Naive thymus-derived CD4-positive, alpha-beta T cell (primary cell): ENCODE measurements at regions of chr7 and their contacts with region 1.

Region 1: GRCh38 chr7:100428967-100429636 is 529 bp upstream of the MEPCE start:
- DNase-seq: peak; percentile 100
- ATAC-seq: peak; percentile 76
- H3K4me3 ChIP-seq: peak overlapping the region; percentile 88
- H3K4me3 Mint-ChIP-seq: peak overlapping the region; percentile 93 to 100 (median 97)
- H3K27ac ChIP-seq: peak overlapping the region; percentile 97
- H3K27ac Mint-ChIP-seq: peak overlapping the region; percentile 99 to 100 (median 100)
- H3K4me1 ChIP-seq: peaks cover 22 to 29% of the 10 kb centered on the region in 2 donors
- H3K4me1 Mint-ChIP-seq: peaks cover 22 to 56% (median 42%) of the 10 kb centered on the region in 7 donors
- H3K27me3 ChIP-seq: no peaks in the 10 kb centered on the region
- H3K27me3 Mint-ChIP-seq: peaks cover 0 to 24% (median 0%) of the 10 kb centered on the region in 5 donors

Region 2: GRCh38 chr7:100081535-100082102 is 347.5 kb before region 1 on chr7 and contains the start of gene ZNF3:
- CTCF ChIA-PET with region 1: no interaction called
- POLR2A ChIA-PET with region 1: no interaction called
- intact Hi-C with region 1: loop called (anchors 1 to 2 kb)
- DNase-seq: peak; percentile 87 to 98 (median 97)
- ATAC-seq: peak; percentile 94
- H3K4me3 ChIP-seq: peak within 1 kb of the TSS; percentile 78
- H3K4me3 Mint-ChIP-seq: peak within 1 kb of the TSS; percentile 89 to 96 (median 92)
- H3K27ac ChIP-seq: peak within 1 kb of the TSS; percentile 82
- H3K27ac Mint-ChIP-seq: peak within 1 kb of the TSS; percentile 64 to 98 (median 91)
- H3K4me1 ChIP-seq: peaks cover 5 to 18% of the 10 kb centered on the region in 2 donors
- H3K4me1 Mint-ChIP-seq: peaks cover 26 to 46% (median 41%) of the 10 kb centered on the region in 7 donors
- H3K27me3 ChIP-seq: no peaks in the 10 kb centered on the region
- H3K27me3 Mint-ChIP-seq: peaks cover 0 to 19% (median 0%) of the 10 kb centered on the region in 5 donors
- total RNA-seq, gene ZNF3: 29.1 to 48.0 (median 35.0) TPM

Region 3: DNA sequence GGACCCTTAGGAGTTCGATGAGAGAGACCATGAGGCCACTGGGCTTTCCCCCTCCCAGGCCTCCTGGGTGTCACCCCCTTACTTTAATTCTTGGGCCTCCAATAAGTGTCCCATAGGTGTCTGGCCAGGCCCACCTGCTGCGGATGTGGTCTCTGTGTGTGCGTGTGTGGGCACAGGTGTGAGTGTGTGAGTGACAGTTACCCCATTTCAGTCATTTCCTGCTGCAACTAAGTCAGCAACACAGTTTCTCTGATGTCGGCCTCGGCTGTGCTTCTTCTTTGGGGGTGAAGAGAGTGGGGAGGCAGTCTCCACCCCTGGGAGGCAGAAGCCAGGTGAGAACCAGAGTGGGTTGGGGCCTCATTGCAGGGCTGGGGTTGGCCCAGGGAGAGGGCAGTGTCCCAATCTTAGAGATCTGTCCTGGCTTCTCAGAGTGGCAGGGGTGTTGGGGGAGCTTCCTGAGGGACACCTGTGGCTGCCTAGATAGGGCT is 207.8 kb before region 1 on chr7:
- CTCF ChIA-PET with region 1: no interaction called
- POLR2A ChIA-PET with region 1: interaction called, 7 read pairs
- intact Hi-C with region 1: loop called (anchors 1 to 2 kb)
- DNase-seq: peak; percentile 33 to 90 (median 87)
- ATAC-seq: peak; percentile 79
- H3K4me3 ChIP-seq: peak overlapping the region; percentile 81
- H3K4me3 Mint-ChIP-seq: peak overlapping the region; percentile 81 to 99 (median 97)
- H3K27ac ChIP-seq: peak overlapping the region; percentile 99
- H3K27ac Mint-ChIP-seq: peak overlapping the region; percentile 96 to 100 (median 99)
- H3K4me1 ChIP-seq: peaks cover 38 to 45% of the 10 kb centered on the region in 2 donors
- H3K4me1 Mint-ChIP-seq: peaks cover 35 to 74% (median 66%) of the 10 kb centered on the region in 7 donors
- H3K27me3 ChIP-seq: no peaks in the 10 kb centered on the region
- H3K27me3 Mint-ChIP-seq: no peaks in the 10 kb centered on the region

Region 4: GRCh38 chr7:100478966-100479665 is 50.0 kb after region 1 on chr7 and contains the start of gene TSC22D4:
- CTCF ChIA-PET with region 1: no interaction called
- POLR2A ChIA-PET with region 1: interaction called, 25 read pairs
- intact Hi-C with region 1: loop called (anchors 1 kb)
- DNase-seq: peak; percentile 82 to 96 (median 95)
- ATAC-seq: peak; percentile 83
- H3K4me3 ChIP-seq: peak within 1 kb of the TSS; percentile 97
- H3K4me3 Mint-ChIP-seq: peak within 1 kb of the TSS; percentile 92 to 100 (median 98)
- H3K27ac ChIP-seq: peak within 1 kb of the TSS; percentile 87
- H3K27ac Mint-ChIP-seq: peak within 1 kb of the TSS; percentile 80 to 98 (median 93)
- H3K4me1 ChIP-seq: peaks cover 42 to 51% of the 10 kb centered on the region in 2 donors
- H3K4me1 Mint-ChIP-seq: peaks cover 25 to 62% (median 38%) of the 10 kb centered on the region in 7 donors
- H3K27me3 ChIP-seq: no peaks in the 10 kb centered on the region
- H3K27me3 Mint-ChIP-seq: peaks cover 0 to 2% (median 0%) of the 10 kb centered on the region in 5 donors
- total RNA-seq, gene TSC22D4: 75.6 to 124 (median 115) TPM

Region 5: DNA sequence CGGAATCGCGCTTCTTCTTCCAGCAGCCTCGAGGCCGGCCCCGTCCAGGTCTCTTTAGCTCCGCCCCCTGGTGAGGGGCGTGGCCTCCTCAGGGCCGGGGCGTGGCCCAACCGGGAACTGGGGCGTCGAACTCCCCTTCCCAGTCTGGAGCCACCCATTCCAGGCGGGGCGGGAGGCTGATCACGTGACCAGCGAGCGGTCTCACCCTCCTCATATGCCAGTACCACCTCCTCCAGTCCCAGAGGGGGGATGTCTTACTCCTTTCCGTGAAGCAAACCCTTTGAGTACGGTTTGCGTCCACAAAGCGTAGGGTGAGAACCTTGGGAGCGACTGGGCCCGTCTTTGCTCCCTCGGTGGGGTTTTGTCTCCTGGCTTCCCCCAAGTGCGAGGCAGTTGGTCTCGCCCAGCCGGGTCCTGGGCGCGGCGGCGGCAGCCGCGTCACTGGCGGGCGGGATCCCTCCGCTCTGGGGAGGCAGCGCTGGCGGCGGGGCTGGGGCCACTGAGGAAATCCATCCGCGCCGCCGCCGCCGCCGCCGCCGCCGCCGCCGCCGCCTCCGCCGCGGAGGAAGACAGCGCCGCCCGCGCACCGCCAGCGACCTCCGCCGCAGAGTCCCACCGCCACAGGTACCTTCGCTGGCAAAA is 244.3 kb after region 1 on chr7 and contains the start of gene GNB2:
- CTCF ChIA-PET with region 1: no interaction called
- POLR2A ChIA-PET with region 1: interaction called, 4 read pairs
- intact Hi-C with region 1: loop called (anchors 1 kb)
- DNase-seq: peak; percentile 92 to 100 (median 96)
- ATAC-seq: peak; percentile 75
- H3K4me3 ChIP-seq: peak within 1 kb of the TSS; percentile 82
- H3K4me3 Mint-ChIP-seq: peak within 1 kb of the TSS; percentile 89 to 99 (median 96)
- H3K27ac ChIP-seq: peak within 1 kb of the TSS; percentile 98
- H3K27ac Mint-ChIP-seq: peak within 1 kb of the TSS; percentile 88 to 97 (median 95)
- H3K4me1 ChIP-seq: no peaks in the 10 kb centered on the region
- H3K4me1 Mint-ChIP-seq: peaks cover 9 to 25% (median 15%) of the 10 kb centered on the region in 7 donors
- H3K27me3 ChIP-seq: no peaks in the 10 kb centered on the region
- H3K27me3 Mint-ChIP-seq: peaks cover 0 to 17% (median 0%) of the 10 kb centered on the region in 5 donors
- total RNA-seq, gene GNB2: 98.2 to 215 (median 132) TPM

Region 6: DNA sequence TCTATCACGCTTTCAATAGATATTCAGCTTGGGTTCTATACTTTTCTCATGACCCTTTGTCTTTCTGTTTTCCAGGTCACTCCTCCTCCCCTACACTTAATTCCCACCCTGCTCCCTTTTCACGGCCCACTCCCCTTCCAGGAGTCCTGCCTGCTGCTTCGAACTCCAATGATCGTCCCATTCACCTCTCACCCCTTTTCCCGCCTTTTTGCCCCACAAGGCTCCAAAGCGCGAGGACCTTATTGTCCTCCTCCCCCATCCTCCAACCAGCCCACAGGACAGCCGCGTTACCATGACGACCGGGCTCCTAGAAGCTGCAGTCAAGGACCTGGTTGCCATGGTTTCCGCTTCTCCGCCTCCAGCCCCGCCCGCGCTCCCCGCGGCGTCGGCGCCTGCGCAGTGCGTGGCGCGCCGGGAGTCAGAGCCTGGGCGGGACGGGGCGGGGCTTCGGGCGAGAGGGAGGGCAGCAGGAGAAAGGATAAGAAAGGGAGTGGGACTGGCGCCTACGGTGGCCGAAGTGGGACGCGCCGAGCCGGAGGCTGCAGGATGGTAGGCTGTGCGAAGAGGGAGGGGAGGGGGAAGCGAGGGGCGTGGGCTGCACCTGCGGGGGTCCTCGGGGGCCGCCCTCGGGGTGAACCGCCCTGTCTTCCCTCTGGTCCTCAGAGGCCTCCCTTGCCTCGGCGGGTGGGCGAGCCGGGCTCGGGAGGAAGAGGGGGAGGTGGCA is 725.0 kb after region 1 on chr7 and contains the start of gene AP1S1:
- CTCF ChIA-PET with region 1: no interaction called
- POLR2A ChIA-PET with region 1: no interaction called
- intact Hi-C with region 1: loop called in 1 of 2 experiments (anchors 2 kb)
- DNase-seq: peak; percentile 82 to 94 (median 90)
- ATAC-seq: peak; percentile 95
- H3K4me3 ChIP-seq: peak within 1 kb of the TSS; percentile 62
- H3K4me3 Mint-ChIP-seq: peak within 1 kb of the TSS; percentile 70 to 91 (median 84)
- H3K27ac ChIP-seq: peak within 1 kb of the TSS; percentile 42
- H3K27ac Mint-ChIP-seq: peak within 1 kb of the TSS in 8 of 9 donors; percentile 29 to 95 (median 78)
- H3K4me1 ChIP-seq: peaks cover 10% of the 10 kb centered on the region in 2 donors
- H3K4me1 Mint-ChIP-seq: peaks cover 10 to 21% (median 13%) of the 10 kb centered on the region in 7 donors
- H3K27me3 ChIP-seq: no peaks in the 10 kb centered on the region
- H3K27me3 Mint-ChIP-seq: peaks cover 7 to 24% (median 8%) of the 10 kb centered on the region in 5 donors
- total RNA-seq, gene AP1S1: 6.2 to 39.4 (median 8.3) TPM